Body of pancreas (tissue), 4 donors: ENCODE measurements at regions of chr19 and their contacts with region 1.

Region 1: GRCh38 chr19:51593969-51594773 is 23.1 kb downstream of the ZNF175 start:
- DNase-seq: peak; percentile 98 to 99 (median 99)
- ATAC-seq: peak; percentile 100
- H3K4me3 ChIP-seq: peak overlapping the region; percentile 37 to 62
- H3K27ac ChIP-seq: peak overlapping the region in 2 of 4 donors; percentile 60 to 69
- H3K4me1 ChIP-seq: peaks cover 20% of the 10 kb centered on the region
- H3K27me3 ChIP-seq: no peaks in the 10 kb centered on the region
- CTCF ChIP-seq: peak in 2 of 7 experiments; percentile 3 to 17
- POLR2A ChIP-seq: peak in 2 of 3 donors; percentile 45 to 64

Region 2: DNA sequence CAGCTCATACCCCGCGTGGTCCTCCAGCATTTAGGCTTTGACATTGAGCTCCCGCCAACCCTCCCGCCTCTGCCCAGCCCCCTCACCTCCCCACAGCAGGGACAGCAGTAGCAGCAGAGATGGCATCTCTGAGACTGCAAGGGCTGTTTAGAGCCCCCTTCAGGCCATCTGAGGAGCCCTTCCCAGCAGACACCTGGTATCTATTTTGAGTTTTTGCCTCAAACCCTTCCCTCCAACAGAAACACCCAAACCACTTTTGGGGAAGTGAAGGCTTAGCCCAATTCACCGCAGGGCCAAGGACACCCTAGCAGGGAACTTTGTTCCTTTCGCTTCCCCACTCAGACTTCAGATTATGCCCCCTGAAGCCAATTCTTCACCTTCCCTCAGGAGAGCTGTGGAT is 29.4 kb before region 1 on chr19:
- intact Hi-C with region 1: loop called (anchors 5 kb)
- DNase-seq: no peak
- ATAC-seq: no peak
- H3K4me3 ChIP-seq: no peak overlapping the region
- H3K27ac ChIP-seq: no peak overlapping the region
- H3K4me1 ChIP-seq: no peaks in the 10 kb centered on the region
- H3K27me3 ChIP-seq: no peaks in the 10 kb centered on the region
- CTCF ChIP-seq: no peak
- POLR2A ChIP-seq: no peak

Region 3: DNA sequence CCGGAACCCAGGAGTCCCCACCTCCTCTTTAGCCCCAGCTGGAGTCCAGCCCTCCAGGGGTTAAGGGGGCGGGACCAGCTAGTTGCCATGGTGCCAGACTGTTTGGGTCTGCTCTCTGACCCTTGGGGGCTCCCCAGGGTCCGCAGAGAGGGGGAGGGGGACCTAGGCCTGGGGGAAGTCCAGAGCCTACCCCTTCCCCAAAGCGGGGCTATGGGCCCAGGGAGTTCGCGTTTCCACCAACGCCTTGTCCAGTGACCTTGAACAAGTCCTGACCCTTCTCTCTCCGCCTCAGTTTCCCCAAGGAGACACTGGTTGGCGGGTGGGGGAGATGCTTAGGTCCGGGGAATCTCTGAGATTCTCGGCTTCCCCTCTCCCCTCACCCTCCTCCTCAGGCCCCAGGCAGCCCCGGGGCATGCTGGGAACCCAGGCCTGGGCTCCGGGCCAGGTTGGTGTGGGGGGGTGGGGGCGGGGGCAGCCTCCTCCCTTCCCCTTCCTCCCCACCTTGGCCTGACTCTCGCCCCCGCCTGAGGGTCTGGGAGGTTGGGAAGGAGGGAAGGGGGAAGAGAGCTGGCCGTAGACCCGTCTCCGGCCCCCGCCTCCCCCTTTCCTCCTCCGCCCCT is 96.4 kb after region 1 on chr19:
- intact Hi-C with region 1: loop called (anchors 10 kb)
- DNase-seq: peak in 3 of 4 donors; percentile 44 to 64 (median 61)
- ATAC-seq: peak; percentile 39
- H3K4me3 ChIP-seq: peak overlapping the region; percentile 61
- H3K27ac ChIP-seq: peak overlapping the region; percentile 85 to 95 (median 91)
- H3K4me1 ChIP-seq: peaks cover 31% of the 10 kb centered on the region
- H3K27me3 ChIP-seq: no peaks in the 10 kb centered on the region
- CTCF ChIP-seq: no peak
- POLR2A ChIP-seq: peak in 1 of 3 donors; percentile 43

Region 4: DNA sequence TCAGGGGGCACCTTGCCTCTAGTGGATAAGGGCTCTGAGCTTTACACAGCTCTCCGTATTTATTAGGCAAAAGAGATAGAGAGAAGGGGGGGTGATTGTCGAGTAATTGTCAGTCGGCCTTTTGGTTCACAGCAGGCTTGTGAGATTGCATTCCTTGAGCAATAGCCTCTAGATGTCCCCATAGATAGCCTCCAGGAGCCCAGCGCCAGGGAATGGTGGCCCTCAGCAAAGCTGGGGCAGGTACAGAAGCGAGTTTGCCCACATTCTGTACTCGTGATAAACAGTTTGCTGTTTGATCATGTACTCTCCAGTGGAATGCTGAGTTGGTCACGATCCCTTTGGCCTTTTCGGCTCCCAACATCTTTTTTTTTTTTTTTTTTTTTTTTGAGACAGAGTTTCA is 337.8 kb after region 1 on chr19:
- intact Hi-C with region 1: no loop called
- DNase-seq: no peak
- ATAC-seq: no peak
- H3K4me3 ChIP-seq: no peak overlapping the region
- H3K27ac ChIP-seq: no peak overlapping the region
- H3K4me1 ChIP-seq: peaks cover 8% of the 10 kb centered on the region
- H3K27me3 ChIP-seq: no peaks in the 10 kb centered on the region
- CTCF ChIP-seq: no peak
- POLR2A ChIP-seq: no peak